ENCODE measurements at regions of chr4 and their contacts with region 1.

Region 1: DNA sequence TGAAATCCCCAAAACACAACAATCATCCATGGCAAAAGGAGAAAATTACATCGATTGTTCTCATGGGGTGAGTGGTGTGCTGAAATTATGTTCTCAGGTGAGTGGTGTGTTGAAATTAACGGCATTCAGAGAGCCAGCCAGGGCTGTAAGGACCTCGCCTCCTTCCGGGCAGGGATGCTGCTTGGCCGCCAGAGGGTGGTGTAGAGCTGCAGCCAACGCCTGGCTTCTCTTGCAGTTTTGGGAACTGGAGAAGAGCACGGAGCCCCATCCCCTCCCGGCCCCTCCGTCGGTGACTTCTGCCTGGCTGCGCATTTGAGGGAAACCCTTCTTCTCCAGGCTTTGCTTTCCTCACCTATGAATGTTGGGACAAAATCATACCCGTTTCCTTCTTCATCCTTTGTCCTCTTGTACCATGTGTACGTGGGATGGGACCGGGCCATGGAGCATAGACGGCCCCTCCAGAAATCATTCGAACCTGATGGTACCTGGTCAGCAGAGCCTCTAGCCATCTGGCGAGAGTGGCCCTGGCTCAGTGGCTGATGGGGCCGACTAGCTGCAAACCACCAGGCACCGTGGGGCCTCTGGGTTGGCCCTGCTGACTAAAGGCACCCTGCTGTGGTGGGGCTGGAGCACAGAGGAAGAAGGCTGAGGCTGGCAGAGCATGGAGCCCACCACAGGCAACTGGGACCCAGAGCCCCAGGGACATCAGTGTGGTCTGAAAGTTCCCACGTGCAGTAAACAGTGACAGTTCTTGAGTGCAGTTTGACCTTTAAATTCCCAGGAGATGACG is 28.4 kb downstream of the TRMT44 start:
- DNase-seq: peak; percentile 60 to 80
- H3K4me3 ChIP-seq: no peak overlapping the region
- H3K4me3 Mint-ChIP-seq: no peak overlapping the region
- H3K27ac Mint-ChIP-seq: no peak overlapping the region
- H3K4me1 ChIP-seq: peaks cover 14% of the 10 kb centered on the region
- H3K4me1 Mint-ChIP-seq: peaks cover 7% of the 10 kb centered on the region
- H3K27me3 ChIP-seq: no peaks in the 10 kb centered on the region
- H3K27me3 Mint-ChIP-seq: no peaks in the 10 kb centered on the region
- CTCF ChIP-seq: peak; percentile 82 to 93

Region 2: DNA sequence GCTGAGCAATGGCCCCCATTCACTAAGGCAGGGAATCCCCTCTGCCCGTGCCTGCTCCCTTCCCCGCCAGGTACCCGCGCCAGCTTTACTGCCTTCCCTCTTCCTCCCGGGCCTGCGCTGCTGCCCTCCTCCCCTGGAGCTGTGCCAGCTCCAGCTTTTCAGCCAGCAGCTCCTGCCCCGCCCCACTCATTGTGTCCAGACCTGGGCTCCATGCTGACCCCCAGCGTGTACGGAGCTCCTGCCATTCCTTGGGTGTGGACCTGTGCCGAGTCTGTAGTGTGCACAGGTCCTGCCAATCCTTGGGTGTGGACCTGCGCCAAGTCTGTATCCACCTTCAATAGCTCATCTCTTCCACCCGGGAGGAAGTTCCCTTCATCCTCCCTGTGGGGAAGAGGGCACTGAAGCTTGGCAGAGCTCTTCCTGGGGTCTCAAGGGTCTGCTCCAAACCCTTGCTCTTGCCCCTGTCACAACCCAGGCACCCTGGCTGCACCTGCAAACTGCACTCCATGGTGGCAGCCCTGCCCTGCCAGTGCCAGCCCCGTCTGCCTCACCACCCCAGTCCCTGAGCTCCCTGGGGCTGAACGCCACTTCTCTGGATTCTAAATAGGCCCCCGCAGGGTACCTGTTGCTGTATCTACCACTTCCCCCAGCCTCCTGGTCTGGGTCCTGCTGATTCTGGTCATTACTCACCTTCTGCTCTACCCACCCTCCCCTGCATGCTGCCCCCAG is 35.5 kb after region 1 on chr4:
- CTCF ChIA-PET with region 1: no interaction called
- POLR2A ChIA-PET with region 1: no interaction called
- intact Hi-C with region 1: no loop called
- DNase-seq: no peak
- H3K4me3 ChIP-seq: no peak overlapping the region
- H3K4me3 Mint-ChIP-seq: no peak overlapping the region
- H3K27ac Mint-ChIP-seq: no peak overlapping the region
- H3K4me1 ChIP-seq: no peaks in the 10 kb centered on the region
- H3K4me1 Mint-ChIP-seq: no peaks in the 10 kb centered on the region
- H3K27me3 ChIP-seq: no peaks in the 10 kb centered on the region
- H3K27me3 Mint-ChIP-seq: no peaks in the 10 kb centered on the region
- CTCF ChIP-seq: no peak

Region 3: DNA sequence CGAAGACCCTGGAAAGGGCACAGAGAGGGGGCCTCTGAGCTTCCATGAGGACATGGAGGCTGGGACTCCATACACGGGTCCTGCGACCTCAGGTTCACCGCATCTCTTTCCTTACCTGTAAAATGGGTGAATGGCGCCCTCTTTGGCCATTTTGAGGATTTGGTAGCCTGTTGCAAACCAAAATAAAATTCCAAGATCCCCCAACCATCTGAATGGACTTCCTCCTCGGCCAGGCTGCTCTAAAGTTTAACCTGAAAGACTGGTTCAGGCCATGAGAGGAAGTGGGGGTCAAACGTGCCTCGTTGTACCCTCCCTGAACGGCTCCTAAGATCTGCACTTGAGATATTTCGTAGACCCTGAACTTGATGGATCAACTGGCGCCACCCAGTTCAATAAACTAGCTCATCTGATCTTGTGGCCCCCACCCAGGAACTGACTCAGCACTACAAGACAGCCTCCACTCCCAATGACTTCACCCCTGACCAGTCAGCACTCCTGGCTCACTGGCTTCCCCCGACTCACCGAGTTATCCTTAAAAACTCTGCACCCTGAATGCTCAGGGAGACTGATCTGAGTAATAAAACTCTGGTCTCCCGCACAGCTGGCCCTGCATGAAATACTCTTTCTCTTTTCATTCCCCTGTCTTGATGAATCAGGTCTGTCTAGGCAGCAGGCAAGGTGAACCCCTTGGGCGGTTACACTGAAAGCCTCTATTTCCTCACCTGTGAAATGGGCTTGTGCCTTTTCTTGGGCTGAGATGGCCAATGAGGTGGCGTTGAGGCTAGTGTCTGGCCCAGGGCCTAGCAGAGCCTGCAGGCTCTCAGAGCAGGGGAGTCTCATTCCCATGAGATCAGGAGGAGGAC is 78.4 kb after region 1 on chr4:
- CTCF ChIA-PET with region 1: no interaction called
- POLR2A ChIA-PET with region 1: no interaction called
- intact Hi-C with region 1: loop called (anchors 2 kb)
- DNase-seq: no peak
- H3K4me3 ChIP-seq: no peak overlapping the region
- H3K4me3 Mint-ChIP-seq: no peak overlapping the region
- H3K27ac Mint-ChIP-seq: no peak overlapping the region
- H3K4me1 ChIP-seq: peaks cover 24% of the 10 kb centered on the region
- H3K4me1 Mint-ChIP-seq: peaks cover 15% of the 10 kb centered on the region
- H3K27me3 ChIP-seq: no peaks in the 10 kb centered on the region
- H3K27me3 Mint-ChIP-seq: no peaks in the 10 kb centered on the region
- CTCF ChIP-seq: peak; percentile 17 to 23

Region 4: GRCh38 chr4:8586671-8587455 is 117.9 kb after region 1 on chr4:
- CTCF ChIA-PET with region 1: interaction called, 8 read pairs
- POLR2A ChIA-PET with region 1: no interaction called
- intact Hi-C with region 1: loop called (anchors 1 kb)
- DNase-seq: peak; percentile 50 to 51
- H3K4me3 ChIP-seq: no peak overlapping the region
- H3K4me3 Mint-ChIP-seq: no peak overlapping the region
- H3K27ac Mint-ChIP-seq: no peak overlapping the region
- H3K4me1 ChIP-seq: peaks cover under 1% of the 10 kb centered on the region; the same call in 1 of the 2 replicates
- H3K4me1 Mint-ChIP-seq: no peaks in the 10 kb centered on the region
- H3K27me3 ChIP-seq: no peaks in the 10 kb centered on the region; the same call in 1 of the 2 replicates
- H3K27me3 Mint-ChIP-seq: peaks cover 2% of the 10 kb centered on the region
- CTCF ChIP-seq: peak in 1 of 2 experiments; percentile 73

Region 5: GRCh38 chr4:8594097-8595038 is 125.4 kb after region 1 on chr4:
- CTCF ChIA-PET with region 1: interaction called, 3 read pairs
- POLR2A ChIA-PET with region 1: no interaction called
- intact Hi-C with region 1: loop called (anchors 1 kb)
- DNase-seq: peak; percentile 73 to 81
- H3K4me3 ChIP-seq: no peak overlapping the region
- H3K4me3 Mint-ChIP-seq: peak overlapping the region; percentile 60
- H3K27ac Mint-ChIP-seq: peak overlapping the region; percentile 51
- H3K4me1 ChIP-seq: peaks cover 17% of the 10 kb centered on the region
- H3K4me1 Mint-ChIP-seq: peaks cover 6% of the 10 kb centered on the region
- H3K27me3 ChIP-seq: no peaks in the 10 kb centered on the region; the same call in 1 of the 2 replicates
- H3K27me3 Mint-ChIP-seq: peaks cover 2% of the 10 kb centered on the region
- CTCF ChIP-seq: peak; percentile 68 to 78

Region 6: GRCh38 chr4:8917868-8918783 is 449.2 kb after region 1 on chr4:
- CTCF ChIA-PET with region 1: no interaction called
- POLR2A ChIA-PET with region 1: no interaction called
- intact Hi-C with region 1: loop called (anchors 2 kb)
- DNase-seq: peak; percentile 54 to 80
- H3K4me3 ChIP-seq: no peak overlapping the region
- H3K4me3 Mint-ChIP-seq: no peak overlapping the region
- H3K27ac Mint-ChIP-seq: no peak overlapping the region
- H3K4me1 ChIP-seq: no peaks in the 10 kb centered on the region
- H3K4me1 Mint-ChIP-seq: no peaks in the 10 kb centered on the region
- H3K27me3 ChIP-seq: no peaks in the 10 kb centered on the region
- H3K27me3 Mint-ChIP-seq: peaks cover 11% of the 10 kb centered on the region
- CTCF ChIP-seq: peak; percentile 76 to 89